Left lung (tissue), 14 donors: ENCODE measurements at regions of chr1 and their contacts with region 1.

Region 1: GRCh38 chr1:205977402-205978014 is 25.7 kb downstream of the RAB7B start:
- DNase-seq: peak; percentile 69 to 85 (median 82)
- ATAC-seq: peak; percentile 92
- H3K4me3 ChIP-seq: no peak overlapping the region
- H3K27ac ChIP-seq: no peak overlapping the region
- H3K4me1 ChIP-seq: peaks cover 0 to 4% of the 10 kb centered on the region in 2 donors
- H3K27me3 ChIP-seq: no peaks in the 10 kb centered on the region
- CTCF ChIP-seq: peak; percentile 97 to 98

Region 2: GRCh38 chr1:205791568-205792180 is 185.8 kb before region 1 on chr1:
- intact Hi-C with region 1: loop called in 1 of 2 experiments (anchors 5 kb)
- DNase-seq: peak in 1 of 4 donors; percentile 60
- ATAC-seq: peak; percentile 94
- H3K4me3 ChIP-seq: no peak overlapping the region
- H3K27ac ChIP-seq: no peak overlapping the region
- H3K4me1 ChIP-seq: no peaks in the 10 kb centered on the region
- H3K27me3 ChIP-seq: no peaks in the 10 kb centered on the region
- CTCF ChIP-seq: peak; percentile 66 to 67

Region 3: DNA sequence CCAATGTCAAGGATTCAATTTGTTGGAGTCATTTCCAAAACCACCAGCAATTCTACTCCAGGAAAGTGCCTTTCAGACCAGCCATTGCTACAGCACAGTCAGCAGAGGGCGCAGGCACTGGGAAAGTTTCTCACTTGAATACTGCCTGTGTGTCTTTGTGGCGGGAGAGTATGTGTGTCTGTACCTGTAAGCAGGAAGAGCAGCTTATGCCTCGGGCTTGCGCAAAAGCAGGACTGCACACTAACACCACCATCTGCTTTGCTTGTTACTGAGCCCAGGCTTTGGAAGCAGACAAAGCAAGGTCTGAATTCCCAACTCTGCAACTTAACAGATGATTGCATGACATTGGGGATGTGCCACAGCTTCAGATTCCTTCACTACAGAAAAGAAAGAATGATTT is 53.2 kb after region 1 on chr1:
- intact Hi-C with region 1: no loop called
- DNase-seq: peak; percentile 17 to 79 (median 72)
- ATAC-seq: peak; percentile 95
- H3K4me3 ChIP-seq: no peak overlapping the region
- H3K27ac ChIP-seq: no peak overlapping the region
- H3K4me1 ChIP-seq: peaks cover 0 to 27% of the 10 kb centered on the region in 2 donors
- H3K27me3 ChIP-seq: no peaks in the 10 kb centered on the region
- CTCF ChIP-seq: peak; percentile 60 to 71